PC-3 (cell line): ENCODE measurements at regions of chr1 and their contacts with region 1.

Region 1: DNA sequence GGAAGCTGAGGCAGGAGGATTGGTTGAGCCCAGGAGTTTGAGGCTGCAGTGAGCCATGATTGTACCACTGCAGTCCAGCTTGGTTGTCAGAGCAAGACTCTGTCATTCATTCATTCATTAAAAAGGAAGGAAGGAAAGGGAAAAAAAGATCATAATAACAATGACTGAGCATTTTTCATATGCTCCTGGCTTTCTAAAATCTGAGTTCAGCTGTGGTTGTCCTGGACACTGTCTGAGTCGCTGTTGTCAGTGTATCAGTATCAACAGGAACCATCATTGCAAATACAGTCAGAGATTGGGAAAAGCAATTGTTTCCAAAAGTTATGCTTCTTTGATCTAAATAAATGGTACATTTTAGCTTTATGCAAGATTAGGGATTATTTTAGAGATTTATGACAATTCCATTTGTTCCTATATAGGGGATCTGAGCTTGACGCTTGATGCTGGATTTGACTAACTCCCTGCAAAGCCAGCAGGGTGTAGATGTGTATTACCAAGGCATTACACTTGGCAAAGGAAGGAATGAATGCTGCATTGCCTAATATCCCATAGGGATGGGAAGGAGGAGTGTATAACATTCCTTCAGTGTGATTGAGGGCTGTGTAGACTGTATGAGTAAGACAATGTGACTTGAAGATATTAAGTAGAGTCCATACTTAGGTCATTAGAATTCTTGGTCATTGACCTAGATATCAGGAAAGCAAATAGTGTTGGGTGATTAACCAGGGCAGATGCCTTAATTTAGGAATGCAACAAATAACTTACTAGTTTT is 100.2 kb downstream of the DISP1 start:
- DNase-seq: peak; percentile 92
- ATAC-seq: peak; percentile 81
- H3K4me3 ChIP-seq: no peak overlapping the region
- H3K27ac ChIP-seq: peak overlapping the region; percentile 65
- H3K4me1 ChIP-seq: peaks cover 48% of the 10 kb centered on the region
- H3K27me3 ChIP-seq: no peaks in the 10 kb centered on the region
- CTCF ChIP-seq: peak; percentile 41; the same call in 1 of the 2 replicates

Region 2: DNA sequence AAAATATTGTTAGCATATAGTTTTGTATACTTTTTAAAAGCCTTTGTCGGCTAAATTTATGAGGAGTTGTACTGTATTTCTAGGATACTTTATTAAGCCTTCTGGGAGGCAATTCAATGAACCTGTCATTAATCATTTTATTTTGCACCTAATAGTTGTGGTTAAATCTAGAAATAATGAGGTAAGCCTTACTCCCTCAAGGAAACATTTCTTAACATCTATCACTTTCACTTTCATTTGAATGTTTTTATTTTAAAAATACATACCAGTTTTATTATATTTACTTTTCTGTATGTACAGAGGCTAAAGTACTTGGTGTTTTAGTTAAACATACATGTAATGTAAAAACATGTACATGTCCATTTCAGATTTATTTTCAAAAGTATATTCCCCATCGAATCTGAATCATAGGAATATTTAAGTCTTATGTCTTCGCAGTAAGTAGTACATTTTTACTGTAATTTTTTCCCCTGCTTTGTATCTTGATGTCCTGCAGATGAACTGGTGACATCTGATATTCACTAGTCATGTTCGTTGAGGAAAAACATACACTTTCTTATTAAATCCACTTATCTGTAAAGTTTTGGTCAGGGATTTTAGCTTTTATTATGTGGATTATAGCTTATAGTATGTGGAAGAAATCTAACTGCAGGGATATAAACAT is 17.4 kb before region 1 on chr1:
- CTCF ChIA-PET with region 1: no interaction called
- POLR2A ChIA-PET with region 1: no interaction called
- intact Hi-C with region 1: loop called (anchors 2 kb)
- DNase-seq: peak; percentile 5
- ATAC-seq: peak; percentile 43
- H3K4me3 ChIP-seq: peak overlapping the region; percentile 60
- H3K27ac ChIP-seq: no peak overlapping the region
- H3K4me1 ChIP-seq: peaks cover 21% of the 10 kb centered on the region
- H3K27me3 ChIP-seq: no peaks in the 10 kb centered on the region
- CTCF ChIP-seq: no peak

Region 3: DNA sequence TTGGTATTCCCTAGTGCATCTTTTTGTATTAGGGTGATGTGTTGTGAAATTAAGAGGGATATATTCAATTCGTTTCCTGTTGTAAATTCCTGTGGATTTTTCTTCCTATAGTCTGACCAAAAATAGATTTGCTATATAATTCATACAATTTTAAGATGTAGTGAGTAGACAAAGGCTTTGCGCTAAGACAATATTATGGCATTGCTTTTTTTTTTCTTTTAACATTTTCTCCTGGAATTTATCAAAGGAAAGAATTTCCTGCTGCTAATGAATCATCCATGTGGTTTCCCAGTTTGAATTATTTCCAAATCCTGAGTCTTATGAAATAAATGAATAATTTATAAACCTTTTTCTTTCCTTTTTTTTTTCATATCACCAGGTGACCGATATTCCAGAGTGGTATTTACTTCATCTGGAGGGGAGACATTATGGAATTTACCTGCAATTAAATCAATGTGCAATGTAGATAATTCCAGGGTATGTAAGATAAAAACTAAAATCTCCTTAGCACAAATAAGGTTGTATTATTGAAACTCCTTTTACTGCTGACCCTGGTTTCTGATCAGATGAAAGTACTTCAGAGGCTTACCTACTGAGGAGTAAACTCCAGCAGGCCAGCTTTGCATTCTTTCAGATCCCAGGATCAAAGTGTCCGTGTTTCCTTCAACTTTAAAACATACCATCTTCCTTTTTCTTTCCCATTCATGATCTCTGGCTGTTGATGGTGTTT is 79.6 kb after region 1 on chr1:
- CTCF ChIA-PET with region 1: no interaction called
- POLR2A ChIA-PET with region 1: no interaction called
- intact Hi-C with region 1: loop called (anchors 5 kb)
- DNase-seq: peak; percentile 85
- ATAC-seq: peak; percentile 86
- H3K4me3 ChIP-seq: no peak overlapping the region
- H3K27ac ChIP-seq: no peak overlapping the region
- H3K4me1 ChIP-seq: peaks cover 19% of the 10 kb centered on the region
- H3K27me3 ChIP-seq: no peaks in the 10 kb centered on the region
- CTCF ChIP-seq: no peak